Caco-2 (cell line): ENCODE measurements at regions of chr14 and their contacts with region 1.

Region 1: GRCh38 chr14:78141590-78141989 is 28.6 kb upstream of the NRXN3 start:
- DNase-seq: no peak
- H3K4me3 ChIP-seq: no peak overlapping the region
- H3K4me3 Mint-ChIP-seq: no peak overlapping the region
- H3K27ac Mint-ChIP-seq: no peak overlapping the region
- H3K4me1 ChIP-seq: no peaks in the 10 kb centered on the region
- H3K4me1 Mint-ChIP-seq: no peaks in the 10 kb centered on the region
- H3K27me3 ChIP-seq: no peaks in the 10 kb centered on the region
- H3K27me3 Mint-ChIP-seq: peaks cover 10% of the 10 kb centered on the region
- CTCF ChIP-seq: no peak

Region 2: DNA sequence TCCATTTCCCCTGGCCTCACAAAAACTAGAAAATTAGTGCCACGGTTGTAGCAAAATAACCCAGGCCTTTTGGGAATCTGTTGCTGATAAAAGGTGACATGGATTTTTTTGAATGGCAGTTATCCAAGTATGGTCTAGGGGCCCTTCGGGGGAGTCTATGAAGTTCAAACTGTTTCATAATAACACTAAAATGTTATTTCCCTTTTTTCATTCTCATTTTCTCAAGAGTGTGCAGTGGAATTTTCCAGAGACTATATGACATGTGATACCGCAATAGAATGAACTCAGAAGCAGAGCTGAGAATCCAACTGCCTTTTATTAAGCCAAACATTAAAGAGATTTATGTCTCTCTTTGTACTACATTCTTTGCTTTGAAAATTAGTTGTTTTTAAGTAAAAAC is 793.8 kb before region 1 on chr14:
- CTCF ChIA-PET with region 1: no interaction called
- POLR2A ChIA-PET with region 1: no interaction called
- intact Hi-C with region 1: no loop called
- DNase-seq: no peak
- H3K4me3 ChIP-seq: no peak overlapping the region
- H3K4me3 Mint-ChIP-seq: no peak overlapping the region
- H3K27ac Mint-ChIP-seq: no peak overlapping the region
- H3K4me1 ChIP-seq: no peaks in the 10 kb centered on the region
- H3K4me1 Mint-ChIP-seq: no peaks in the 10 kb centered on the region
- H3K27me3 ChIP-seq: no peaks in the 10 kb centered on the region
- H3K27me3 Mint-ChIP-seq: no peaks in the 10 kb centered on the region
- CTCF ChIP-seq: no peak

Region 3: GRCh38 chr14:78566026-78566858 is 424.7 kb after region 1 on chr14:
- CTCF ChIA-PET with region 1: no interaction called
- POLR2A ChIA-PET with region 1: no interaction called
- intact Hi-C with region 1: loop called (anchors 2 kb)
- DNase-seq: peak; percentile 68 to 75
- H3K4me3 ChIP-seq: no peak overlapping the region
- H3K4me3 Mint-ChIP-seq: no peak overlapping the region
- H3K27ac Mint-ChIP-seq: no peak overlapping the region
- H3K4me1 ChIP-seq: no peaks in the 10 kb centered on the region
- H3K4me1 Mint-ChIP-seq: no peaks in the 10 kb centered on the region
- H3K27me3 ChIP-seq: no peaks in the 10 kb centered on the region
- H3K27me3 Mint-ChIP-seq: peaks cover 9% of the 10 kb centered on the region
- CTCF ChIP-seq: peak; percentile 61 to 78

Region 4: GRCh38 chr14:78836777-78837176 is 695.2 kb after region 1 on chr14:
- CTCF ChIA-PET with region 1: no interaction called
- POLR2A ChIA-PET with region 1: no interaction called
- intact Hi-C with region 1: no loop called
- DNase-seq: peak; percentile 69
- H3K4me3 ChIP-seq: no peak overlapping the region
- H3K4me3 Mint-ChIP-seq: no peak overlapping the region
- H3K27ac Mint-ChIP-seq: no peak overlapping the region
- H3K4me1 ChIP-seq: no peaks in the 10 kb centered on the region
- H3K4me1 Mint-ChIP-seq: no peaks in the 10 kb centered on the region
- H3K27me3 ChIP-seq: no peaks in the 10 kb centered on the region
- H3K27me3 Mint-ChIP-seq: peaks cover 17% of the 10 kb centered on the region
- CTCF ChIP-seq: peak; percentile 57